ENCODE measurements at regions of chr3 and their contacts with region 1.

Region 1: GRCh38 chr3:195271116-195271858 is at the start of gene XXYLT1:
- DNase-seq: peak; percentile 90 to 92
- H3K4me3 ChIP-seq: peak within 1 kb of the TSS; percentile 52 to 84 (median 70)
- H3K27ac ChIP-seq: peak within 1 kb of the TSS; percentile 10 to 68 (median 60)
- H3K4me1 ChIP-seq: peaks cover 15 to 17% of the 10 kb centered on the region in 2 donors
- H3K27me3 ChIP-seq: no peaks in the 10 kb centered on the region
- CTCF ChIP-seq: peak; percentile 78 to 94 (median 90)
- POLR2A ChIP-seq: no peak
- total RNA-seq, gene XXYLT1: 9.8 to 14.6 (median 13.9) TPM

Region 2: DNA sequence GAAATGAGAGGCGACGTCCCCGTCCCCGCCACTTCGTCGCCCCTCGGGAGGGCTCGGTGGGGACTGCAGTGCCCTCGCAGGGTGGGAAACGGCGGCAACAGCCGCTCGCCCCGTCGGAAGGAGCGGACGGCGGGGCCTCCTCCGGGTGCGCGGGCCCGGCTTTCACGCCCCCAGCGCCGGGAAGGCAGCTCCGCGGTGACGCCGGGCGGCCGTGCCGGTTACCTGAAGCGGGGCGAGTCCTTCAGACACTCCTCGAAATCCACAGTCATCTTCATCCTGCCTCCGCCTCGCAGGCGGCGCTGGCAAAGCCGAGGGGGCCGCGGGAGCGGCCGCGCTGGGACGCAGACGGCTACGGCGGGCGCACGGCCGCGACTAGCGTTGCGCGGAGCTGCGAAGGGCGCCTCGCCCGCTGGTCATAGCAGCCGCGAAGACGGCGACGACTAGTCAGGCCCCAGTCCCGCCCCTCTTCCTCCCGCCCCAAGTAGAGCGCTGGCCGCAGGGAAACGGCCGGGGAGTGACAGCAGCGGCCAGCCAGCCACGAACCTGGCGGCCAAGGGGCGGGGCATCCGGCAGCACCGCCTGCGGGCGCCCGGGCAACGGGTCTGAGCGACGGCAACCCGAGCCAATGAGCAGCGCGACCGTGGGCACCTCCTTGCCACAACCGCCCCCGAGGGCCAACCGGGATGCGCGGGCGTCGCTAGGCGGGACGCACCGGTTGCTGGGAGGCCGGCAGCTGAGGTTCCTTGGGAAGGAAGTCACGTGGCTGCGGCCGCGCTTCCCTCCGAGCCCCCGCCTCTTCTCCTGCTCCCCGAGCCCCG is 171.5 kb after region 1 on chr3 and contains the start of gene ACAP2:
- intact Hi-C with region 1: loop called (anchors 10 kb)
- DNase-seq: peak; percentile 100
- H3K4me3 ChIP-seq: peak within 1 kb of the TSS; percentile 68 to 84 (median 73)
- H3K27ac ChIP-seq: peak within 1 kb of the TSS; percentile 86 to 93 (median 86)
- H3K4me1 ChIP-seq: peaks cover 17% of the 10 kb centered on the region in 2 donors
- H3K27me3 ChIP-seq: no peaks in the 10 kb centered on the region
- CTCF ChIP-seq: peak in 1 of 6 experiments; percentile 9
- POLR2A ChIP-seq: peak; percentile 83 to 97
- total RNA-seq, gene ACAP2: 61.7 to 685 (median 71.3) TPM

Region 3: DNA sequence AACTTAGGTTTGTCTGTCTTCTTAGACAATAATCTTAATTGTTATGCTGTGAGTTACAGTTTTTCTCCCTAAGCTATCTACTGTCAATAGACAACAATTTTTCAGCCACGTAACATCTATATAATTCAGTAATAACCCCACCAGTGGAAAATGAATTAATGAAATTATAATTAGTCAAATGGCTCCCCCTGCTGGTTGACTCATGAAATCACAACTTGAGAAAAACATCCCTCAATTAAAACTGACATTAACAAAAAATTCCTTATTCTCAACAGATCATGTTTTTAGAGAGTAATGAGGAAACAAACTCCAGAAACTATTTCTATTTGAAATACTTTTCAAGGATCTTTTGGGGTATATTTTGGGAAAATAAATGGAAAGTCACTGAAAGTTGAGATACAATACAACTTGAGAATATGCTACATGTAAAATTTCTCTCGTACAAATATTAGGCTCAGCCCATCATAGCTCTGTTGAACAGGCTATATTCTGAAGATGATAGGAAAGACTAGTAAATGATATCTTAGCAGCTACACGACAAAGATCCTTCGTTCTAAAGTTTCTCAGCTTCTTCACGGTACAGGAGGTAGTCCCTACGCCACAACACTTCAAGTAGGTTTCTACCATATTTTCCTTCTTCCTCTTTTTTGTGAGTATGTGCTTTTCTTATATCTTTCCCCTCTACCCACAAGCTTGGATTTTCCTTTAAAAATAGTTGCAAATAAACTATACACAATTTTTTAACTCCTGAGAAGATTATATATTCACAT is 251.2 kb after region 1 on chr3:
- intact Hi-C with region 1: loop called (anchors 1 kb)
- DNase-seq: no peak
- H3K4me3 ChIP-seq: no peak overlapping the region
- H3K27ac ChIP-seq: no peak overlapping the region
- H3K4me1 ChIP-seq: no peaks in the 10 kb centered on the region
- H3K27me3 ChIP-seq: no peaks in the 10 kb centered on the region
- CTCF ChIP-seq: peak; percentile 6 to 86 (median 66)
- POLR2A ChIP-seq: no peak